ENCODE measurements at regions of chr20 and their contacts with region 1.

Region 1: GRCh38 chr20:53578492-53579222 is 15.0 kb downstream of the ZNF217 start:
- DNase-seq: peak; percentile 86
- H3K4me3 ChIP-seq: no peak overlapping the region
- H3K27ac ChIP-seq: peak overlapping the region; percentile 68 to 69
- H3K4me1 ChIP-seq: peaks cover 9% of the 10 kb centered on the region
- H3K27me3 ChIP-seq: no peaks in the 10 kb centered on the region
- CTCF ChIP-seq: peak; percentile 88 to 99 (median 97)
- POLR2A ChIP-seq: no peak

Region 2: GRCh38 chr20:53517146-53517545 is 61.5 kb before region 1 on chr20:
- intact Hi-C with region 1: no loop called
- DNase-seq: no peak
- H3K4me3 ChIP-seq: no peak overlapping the region
- H3K27ac ChIP-seq: no peak overlapping the region
- H3K4me1 ChIP-seq: no peaks in the 10 kb centered on the region
- H3K27me3 ChIP-seq: no peaks in the 10 kb centered on the region
- CTCF ChIP-seq: no peak
- POLR2A ChIP-seq: no peak

Region 3: GRCh38 chr20:53773792-53774401 is 195.2 kb after region 1 on chr20:
- intact Hi-C with region 1: loop called (anchors 10 kb)
- DNase-seq: no peak
- H3K4me3 ChIP-seq: no peak overlapping the region
- H3K27ac ChIP-seq: peak overlapping the region; percentile 2 to 15
- H3K4me1 ChIP-seq: no peaks in the 10 kb centered on the region
- H3K27me3 ChIP-seq: no peaks in the 10 kb centered on the region
- CTCF ChIP-seq: no peak
- POLR2A ChIP-seq: no peak

Region 4: GRCh38 chr20:53869466-53870258 is 291.0 kb after region 1 on chr20:
- intact Hi-C with region 1: loop called (anchors 2 kb)
- DNase-seq: peak; percentile 87
- H3K4me3 ChIP-seq: no peak overlapping the region
- H3K27ac ChIP-seq: peak overlapping the region; percentile 65 to 78
- H3K4me1 ChIP-seq: peaks cover 16% of the 10 kb centered on the region
- H3K27me3 ChIP-seq: no peaks in the 10 kb centered on the region
- CTCF ChIP-seq: peak; percentile 60 to 92 (median 86)
- POLR2A ChIP-seq: no peak

Region 5: GRCh38 chr20:53915446-53916172 is 337.0 kb after region 1 on chr20:
- intact Hi-C with region 1: loop called (anchors 2 kb)
- DNase-seq: peak; percentile 92
- H3K4me3 ChIP-seq: peak overlapping the region; percentile 37 to 47
- H3K27ac ChIP-seq: peak overlapping the region; percentile 77 to 79
- H3K4me1 ChIP-seq: peaks cover 10% of the 10 kb centered on the region
- H3K27me3 ChIP-seq: no peaks in the 10 kb centered on the region
- CTCF ChIP-seq: peak; percentile 89 to 95 (median 92)
- POLR2A ChIP-seq: no peak

Region 6: DNA sequence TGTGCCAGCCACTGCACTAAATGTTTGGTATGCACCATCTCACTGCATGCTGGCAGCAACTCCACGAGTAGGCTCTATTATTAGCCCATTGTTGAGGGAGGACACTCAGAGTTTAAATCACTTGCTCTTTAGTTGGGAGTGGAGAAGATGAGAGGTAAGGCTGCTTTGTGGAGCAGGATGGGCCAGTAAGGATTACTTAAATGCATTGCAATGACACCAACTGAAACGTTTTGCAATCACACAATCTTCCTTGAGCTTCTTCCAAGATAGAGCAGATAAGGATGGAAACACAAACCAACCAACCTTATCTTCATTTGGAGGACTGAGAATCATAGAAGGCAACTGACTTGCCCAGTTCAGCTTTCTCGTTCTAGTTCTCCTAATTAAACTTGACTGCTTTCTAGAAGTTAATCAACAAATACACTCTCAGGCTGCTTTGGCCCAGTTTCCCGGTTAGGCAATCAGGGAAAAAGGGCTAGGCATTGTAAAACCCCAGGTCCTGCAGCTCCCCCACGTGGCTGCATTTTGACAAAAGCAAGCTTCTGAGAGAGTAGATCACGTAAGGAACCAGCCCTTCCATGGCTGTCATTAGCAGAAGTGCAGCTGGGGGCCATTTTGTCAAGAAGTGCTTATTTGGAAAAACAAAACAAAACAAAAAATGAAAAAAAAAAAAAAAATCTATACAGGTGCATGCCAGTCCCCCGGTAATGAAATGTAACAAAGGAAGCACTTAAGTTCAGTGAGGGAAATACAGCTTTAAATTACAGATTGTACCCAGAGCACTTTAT is 361.1 kb after region 1 on chr20:
- intact Hi-C with region 1: loop called (anchors 5 kb)
- DNase-seq: peak; percentile 92
- H3K4me3 ChIP-seq: no peak overlapping the region
- H3K27ac ChIP-seq: peak overlapping the region; percentile 12 to 31
- H3K4me1 ChIP-seq: peaks cover 2% of the 10 kb centered on the region
- H3K27me3 ChIP-seq: no peaks in the 10 kb centered on the region
- CTCF ChIP-seq: peak in 3 of 4 experiments; percentile 66 to 80 (median 79)
- POLR2A ChIP-seq: no peak

Region 7: DNA sequence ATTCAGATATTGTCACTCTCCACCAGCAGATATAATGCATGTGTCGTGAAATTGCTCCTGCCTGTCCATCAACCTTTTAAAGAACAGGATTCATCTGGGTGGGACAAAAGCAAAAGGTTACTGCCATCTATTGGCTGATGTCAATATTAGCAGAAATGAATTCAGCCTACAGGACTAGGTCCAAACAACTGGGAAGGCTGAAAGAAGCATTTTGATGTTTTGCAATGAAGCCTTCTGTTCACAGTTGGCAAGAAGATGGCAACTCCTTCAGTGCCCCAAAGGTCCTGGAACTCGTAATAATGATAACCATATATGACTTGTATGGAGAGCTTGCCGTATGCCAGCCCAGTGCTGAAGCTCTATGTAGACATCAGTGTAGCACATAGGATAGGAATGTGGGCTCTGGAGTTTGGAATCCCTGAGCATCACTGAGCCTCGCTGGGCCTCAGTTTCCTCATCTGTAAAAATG is 484.2 kb after region 1 on chr20:
- intact Hi-C with region 1: loop called (anchors 10 kb)
- DNase-seq: no peak
- H3K4me3 ChIP-seq: no peak overlapping the region
- H3K27ac ChIP-seq: no peak overlapping the region
- H3K4me1 ChIP-seq: no peaks in the 10 kb centered on the region
- H3K27me3 ChIP-seq: no peaks in the 10 kb centered on the region
- CTCF ChIP-seq: peak in 3 of 4 experiments; percentile 34 to 58 (median 48)
- POLR2A ChIP-seq: no peak

Region 8: DNA sequence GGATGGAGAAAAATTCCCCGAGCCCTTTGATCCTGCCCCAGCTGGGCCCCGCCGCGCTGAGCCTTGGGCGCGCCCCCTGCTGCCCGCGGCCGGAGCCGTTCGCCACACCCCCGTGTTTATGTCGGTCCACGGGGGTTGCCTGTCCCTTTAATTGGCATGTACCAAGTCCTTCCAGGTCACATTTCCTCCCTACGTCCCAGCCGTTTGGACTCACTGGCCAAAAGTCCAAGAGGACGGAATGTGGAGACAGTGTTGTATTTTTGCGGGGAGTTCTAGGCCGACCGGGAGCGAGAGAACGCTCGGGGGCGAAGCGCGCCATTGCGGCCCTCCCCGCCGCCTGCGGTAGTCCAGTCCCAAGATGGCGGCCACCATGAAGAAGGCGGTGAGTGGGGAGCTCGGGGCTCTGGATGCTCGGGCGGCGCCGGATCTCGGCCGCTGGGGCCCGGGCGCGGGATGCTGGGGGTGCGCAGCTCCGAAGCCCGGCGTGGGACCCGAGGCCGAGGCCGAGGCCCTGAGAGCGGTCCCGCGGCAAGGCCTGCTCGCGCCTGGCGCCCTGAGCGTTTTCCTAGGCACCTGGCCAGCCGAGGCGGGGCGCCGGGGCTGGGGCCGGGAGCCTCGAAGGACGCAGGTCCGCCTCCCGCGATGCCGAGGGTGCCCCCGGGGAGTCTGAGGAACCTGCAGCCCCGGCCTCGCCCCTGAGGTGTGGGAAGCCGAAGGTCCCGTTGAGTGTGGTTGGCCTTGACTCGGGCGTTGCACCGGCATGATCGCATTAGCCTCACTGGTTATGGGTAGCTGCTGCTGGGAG is 629.3 kb after region 1 on chr20 and contains the start of gene PFDN4:
- intact Hi-C with region 1: loop called (anchors 10 kb)
- DNase-seq: peak; percentile 76
- H3K4me3 ChIP-seq: peak within 1 kb of the TSS; percentile 98
- H3K27ac ChIP-seq: peak within 1 kb of the TSS; percentile 97 to 98
- H3K4me1 ChIP-seq: no peaks in the 10 kb centered on the region
- H3K27me3 ChIP-seq: no peaks in the 10 kb centered on the region
- CTCF ChIP-seq: peak; percentile 45 to 85 (median 74)
- POLR2A ChIP-seq: peak; percentile 27
- total RNA-seq, gene PFDN4: 43.2 to 44.8 TPM

Measured in prostate gland (tissue), 2 donors.